IMR-90 (cell line): ENCODE measurements at regions of chr1 and their contacts with region 1.

Region 1: DNA sequence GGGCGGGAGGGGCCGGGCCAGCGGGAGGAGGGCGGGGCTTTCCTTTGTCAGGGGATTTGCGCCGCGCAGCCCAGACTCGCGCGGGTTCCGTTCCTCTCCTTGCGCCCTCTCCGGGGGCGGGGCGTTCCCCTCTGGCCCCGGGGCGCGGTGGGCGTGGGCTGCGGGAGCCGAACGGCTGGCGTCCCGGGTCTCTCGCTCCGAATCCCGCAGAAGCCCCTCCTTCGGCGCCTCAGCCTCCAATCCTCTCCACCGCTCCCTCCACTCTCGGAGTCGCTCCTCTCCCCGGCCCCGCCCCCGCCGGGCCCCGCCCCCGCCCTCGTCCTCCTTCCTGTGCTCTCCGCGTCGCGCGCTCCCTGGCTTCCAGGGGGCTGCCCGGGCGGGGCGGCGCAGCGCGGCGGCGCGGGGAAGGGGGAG is 82.8 kb upstream of the BMP8A start:
- DNase-seq: peak; percentile 92
- ATAC-seq: peak; percentile 86
- H3K4me3 ChIP-seq: peak overlapping the region; percentile 66
- H3K27ac ChIP-seq: peak overlapping the region; percentile 99
- H3K4me1 ChIP-seq: peaks cover 34% of the 10 kb centered on the region
- H3K27me3 ChIP-seq: no peaks in the 10 kb centered on the region
- CTCF ChIP-seq: no peak
- POLR2A ChIP-seq: no peak
- RAD21 ChIP-seq: no peak

Region 2: DNA sequence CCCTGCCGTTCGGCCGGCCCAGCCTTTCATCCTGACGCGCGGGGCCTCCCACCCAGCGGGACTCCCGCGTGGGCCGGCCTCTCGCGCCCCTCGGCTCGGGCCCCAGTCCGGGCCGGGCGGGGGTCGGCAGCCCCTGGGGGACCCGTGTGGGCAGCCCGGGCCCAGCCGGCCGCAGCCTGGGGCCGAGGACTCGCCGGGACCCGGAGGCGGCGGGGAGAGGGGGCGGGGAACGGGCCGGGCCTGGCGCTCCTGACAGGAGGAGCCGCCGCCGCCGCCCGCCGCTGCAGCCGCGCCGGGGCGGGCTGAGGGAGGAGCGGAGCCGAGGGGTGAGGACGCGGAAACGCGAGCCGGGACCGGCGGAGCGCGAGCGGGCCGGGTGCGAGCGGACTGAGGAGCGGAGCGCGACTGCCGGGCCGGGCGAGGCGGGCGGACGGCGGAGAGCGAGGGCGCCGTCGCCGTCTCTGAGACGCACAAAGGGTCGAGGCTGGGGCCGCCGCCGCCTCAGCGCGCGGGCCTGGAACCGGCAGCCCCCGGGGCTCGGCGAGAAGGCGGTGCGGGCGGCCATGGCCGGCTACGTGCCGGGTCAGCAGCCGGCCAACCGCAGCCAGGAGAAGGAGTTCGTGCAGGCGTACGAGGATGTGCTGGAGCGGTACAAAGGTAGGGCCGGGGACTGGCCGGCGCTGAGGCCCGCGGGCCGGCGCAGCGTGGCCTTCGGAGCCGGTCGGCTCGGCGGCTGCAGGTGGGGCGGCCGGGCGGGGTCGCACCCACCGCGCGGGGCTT is 303.4 kb before region 1 on chr1:
- CTCF ChIA-PET with region 1: no interaction called
- POLR2A ChIA-PET with region 1: interaction called, 3 read pairs
- dilution Hi-C with region 1: no loop called
- in situ Hi-C with region 1: no loop called
- intact Hi-C with region 1: loop called (anchors 2 kb)
- DNase-seq: peak; percentile 59
- ATAC-seq: peak; percentile 76
- H3K4me3 ChIP-seq: peak overlapping the region; percentile 95
- H3K27ac ChIP-seq: peak overlapping the region; percentile 97
- H3K4me1 ChIP-seq: peaks cover 19% of the 10 kb centered on the region
- H3K27me3 ChIP-seq: no peaks in the 10 kb centered on the region
- CTCF ChIP-seq: no peak
- POLR2A ChIP-seq: peak; percentile 39; the same call in 1 of the 2 replicates
- RAD21 ChIP-seq: no peak

Region 3: GRCh38 chr1:39189592-39190041 is 219.0 kb before region 1 on chr1:
- CTCF ChIA-PET with region 1: interaction called, 5 read pairs
- POLR2A ChIA-PET with region 1: no interaction called
- dilution Hi-C with region 1: no loop called
- in situ Hi-C with region 1: no loop called
- intact Hi-C with region 1: loop called (anchors 5 kb)
- DNase-seq: peak; percentile 86
- ATAC-seq: peak; percentile 35
- H3K4me3 ChIP-seq: no peak overlapping the region
- H3K27ac ChIP-seq: no peak overlapping the region; the same call in 1 of the 2 replicates
- H3K4me1 ChIP-seq: peaks cover 25% of the 10 kb centered on the region
- H3K27me3 ChIP-seq: no peaks in the 10 kb centered on the region
- CTCF ChIP-seq: no peak
- POLR2A ChIP-seq: no peak
- RAD21 ChIP-seq: 0 out of 2 replicates have a peak, but pooled peaks have one; percentile 4

Region 4: DNA sequence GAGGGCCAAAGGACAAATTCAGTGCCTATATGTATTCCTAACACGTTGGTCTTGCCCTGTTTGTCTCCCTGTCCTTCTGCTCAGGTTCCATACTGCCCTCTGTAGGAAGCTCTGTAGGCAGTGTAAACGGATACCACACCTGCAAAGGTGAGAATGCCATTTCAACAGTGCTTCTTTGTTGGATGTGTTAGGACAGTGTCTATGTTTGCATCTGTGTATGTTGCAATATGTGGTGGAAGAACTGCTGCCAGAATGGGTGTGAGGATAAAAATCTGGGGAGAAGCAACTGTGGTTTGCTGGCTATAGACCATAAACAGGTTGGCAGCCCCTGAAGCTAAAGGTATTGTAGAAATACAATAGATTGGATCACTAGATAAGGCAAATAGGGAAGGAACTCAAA is 30.3 kb before region 1 on chr1:
- CTCF ChIA-PET with region 1: interaction called, 5 read pairs
- POLR2A ChIA-PET with region 1: no interaction called
- dilution Hi-C with region 1: no loop called
- in situ Hi-C with region 1: no loop called
- intact Hi-C with region 1: loop called (anchors 5 kb)
- DNase-seq: no peak
- ATAC-seq: no peak
- H3K4me3 ChIP-seq: no peak overlapping the region
- H3K27ac ChIP-seq: no peak overlapping the region
- H3K4me1 ChIP-seq: 0 out of 2 replicates have a peak, but pooled peaks cover 2% of the 10 kb centered on the region
- H3K27me3 ChIP-seq: no peaks in the 10 kb centered on the region
- CTCF ChIP-seq: no peak
- POLR2A ChIP-seq: no peak
- RAD21 ChIP-seq: no peak

Region 5: GRCh38 chr1:39391691-39392679 is 16.7 kb before region 1 on chr1:
- CTCF ChIA-PET with region 1: interaction called, 32 read pairs
- POLR2A ChIA-PET with region 1: interaction called, 3 read pairs
- dilution Hi-C with region 1: no loop called
- in situ Hi-C with region 1: no loop called
- intact Hi-C with region 1: loop called (anchors 1 kb)
- DNase-seq: peak; percentile 90
- ATAC-seq: peak; percentile 57
- H3K4me3 ChIP-seq: no peak overlapping the region
- H3K27ac ChIP-seq: peak overlapping the region; percentile 80
- H3K4me1 ChIP-seq: peaks cover 32% of the 10 kb centered on the region
- H3K27me3 ChIP-seq: no peaks in the 10 kb centered on the region
- CTCF ChIP-seq: no peak
- POLR2A ChIP-seq: no peak
- RAD21 ChIP-seq: no peak

Region 6: DNA sequence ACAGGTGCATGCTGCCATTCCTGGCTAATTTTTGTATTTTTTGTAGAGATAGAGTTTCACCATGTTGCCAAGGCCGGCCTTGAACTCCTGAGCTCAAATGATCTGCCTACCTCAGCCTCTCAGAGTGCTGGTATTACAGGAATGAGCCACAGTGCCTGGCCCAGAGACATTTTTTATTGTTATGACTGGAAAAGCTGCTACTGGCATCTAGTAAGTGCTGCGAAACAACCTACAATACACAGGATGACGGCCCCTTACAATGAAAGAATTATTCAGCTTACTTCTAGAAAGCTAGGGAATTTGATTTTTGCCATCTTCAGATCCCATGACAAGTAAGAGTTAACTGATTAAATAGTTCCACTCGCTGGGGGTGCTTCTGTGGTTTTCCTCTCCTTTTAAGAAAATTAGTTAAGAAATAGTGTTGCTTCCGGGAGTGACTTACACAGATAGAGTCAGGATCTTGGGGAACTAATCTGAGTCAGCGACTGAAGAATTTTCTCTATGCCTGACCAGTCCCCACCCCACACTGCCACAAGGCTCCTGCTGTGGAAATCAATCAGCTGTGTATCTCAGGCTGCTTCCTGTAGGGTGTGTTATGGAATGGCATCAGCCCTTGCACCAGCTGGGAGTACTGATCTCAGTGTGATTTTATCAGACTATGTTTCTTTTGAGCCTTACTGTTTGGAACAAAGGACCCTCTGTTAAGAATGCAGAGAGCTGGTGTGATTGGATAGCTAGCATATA is 10.2 kb before region 1 on chr1:
- CTCF ChIA-PET with region 1: interaction called, 15 read pairs
- POLR2A ChIA-PET with region 1: interaction called, 4 read pairs
- dilution Hi-C with region 1: no loop called
- in situ Hi-C with region 1: no loop called
- intact Hi-C with region 1: loop called (anchors 1 kb)
- DNase-seq: peak; percentile 98
- ATAC-seq: peak; percentile 90
- H3K4me3 ChIP-seq: no peak overlapping the region
- H3K27ac ChIP-seq: peak overlapping the region; percentile 87
- H3K4me1 ChIP-seq: peaks cover 12% of the 10 kb centered on the region
- H3K27me3 ChIP-seq: no peaks in the 10 kb centered on the region
- CTCF ChIP-seq: no peak
- POLR2A ChIP-seq: no peak
- RAD21 ChIP-seq: no peak; the same call in 1 of the 2 replicates

Region 7: GRCh38 chr1:39420493-39420892 is 11.8 kb after region 1 on chr1:
- CTCF ChIA-PET with region 1: interaction called, 11 read pairs
- POLR2A ChIA-PET with region 1: no interaction called
- dilution Hi-C with region 1: no loop called
- in situ Hi-C with region 1: no loop called
- intact Hi-C with region 1: no loop called
- DNase-seq: no peak
- ATAC-seq: no peak
- H3K4me3 ChIP-seq: no peak overlapping the region
- H3K27ac ChIP-seq: no peak overlapping the region
- H3K4me1 ChIP-seq: peaks cover 3% of the 10 kb centered on the region; the same call in 1 of the 2 replicates
- H3K27me3 ChIP-seq: no peaks in the 10 kb centered on the region
- CTCF ChIP-seq: no peak
- POLR2A ChIP-seq: no peak
- RAD21 ChIP-seq: no peak